ENCODE measurements at regions of chr11 and their contacts with region 1.

Region 1: GRCh38 chr11:76131671-76132631 is 74.4 kb downstream of the WNT11 start:
- DNase-seq: peak in 1 of 5 donors; percentile 36
- ATAC-seq: peak; percentile 45 to 73 (median 56)
- H3K4me3 ChIP-seq: no peak overlapping the region
- H3K27ac ChIP-seq: peak overlapping the region; percentile 0 to 76 (median 48)
- H3K4me1 ChIP-seq: peaks cover 5 to 62% (median 47%) of the 10 kb centered on the region in 12 donors
- H3K27me3 ChIP-seq: no peaks in the 10 kb centered on the region
- CTCF ChIP-seq: no peak
- POLR2A ChIP-seq: no peak

Region 2: GRCh38 chr11:76074148-76075095 is 57.5 kb before region 1 on chr11:
- intact Hi-C with region 1: loop called in 1 of 10 experiments (anchors 5 kb)
- DNase-seq: no peak
- ATAC-seq: peak in 3 of 4 donors; percentile 38 to 47 (median 46)
- H3K4me3 ChIP-seq: no peak overlapping the region
- H3K27ac ChIP-seq: peak overlapping the region; percentile 2 to 52 (median 26)
- H3K4me1 ChIP-seq: peaks cover 0 to 54% (median 34%) of the 10 kb centered on the region in 12 donors
- H3K27me3 ChIP-seq: no peaks in the 10 kb centered on the region
- CTCF ChIP-seq: no peak
- POLR2A ChIP-seq: no peak